ENCODE measurements at regions of chr10 and their contacts with region 1.

Region 1: GRCh38 chr10:30591249-30591670 is 38.3 kb downstream of the LYZL2 start:
- DNase-seq: peak; percentile 48
- ATAC-seq: peak; percentile 64
- H3K4me3 Mint-ChIP-seq: no peak overlapping the region
- H3K27ac Mint-ChIP-seq: no peak overlapping the region
- H3K4me1 Mint-ChIP-seq: peaks cover 17% of the 10 kb centered on the region
- H3K27me3 Mint-ChIP-seq: peaks cover 24% of the 10 kb centered on the region

Region 2: DNA sequence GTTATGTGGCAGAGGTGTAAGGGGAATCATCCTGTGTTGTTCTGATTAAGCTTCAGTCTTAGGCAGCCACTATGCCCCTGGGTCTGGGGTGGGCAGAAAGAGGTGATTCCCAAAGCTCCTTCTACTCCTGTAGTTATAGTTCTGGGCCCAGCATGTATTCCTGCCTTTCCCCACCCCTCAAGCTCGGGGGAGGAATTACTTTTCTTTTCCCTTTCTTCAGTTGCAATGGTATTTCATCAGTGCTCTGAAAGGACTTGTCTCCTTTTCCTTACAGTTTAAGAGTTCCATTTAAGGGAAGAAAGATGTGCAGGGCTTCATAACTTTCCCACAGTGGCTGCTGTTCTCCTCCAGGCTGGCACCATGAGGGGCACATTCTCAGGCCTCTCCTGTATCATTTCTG is 336.3 kb before region 1 on chr10:
- CTCF ChIA-PET with region 1: no interaction called
- DNase-seq: no peak
- ATAC-seq: no peak
- H3K4me3 Mint-ChIP-seq: no peak overlapping the region
- H3K27ac Mint-ChIP-seq: no peak overlapping the region
- H3K4me1 Mint-ChIP-seq: no peaks in the 10 kb centered on the region
- H3K27me3 Mint-ChIP-seq: peaks cover 37% of the 10 kb centered on the region

Region 3: GRCh38 chr10:30359373-30360206 is 231.7 kb before region 1 on chr10:
- CTCF ChIA-PET with region 1: interaction called, 37 read pairs
- DNase-seq: peak; percentile 81
- ATAC-seq: peak; percentile 89
- H3K4me3 Mint-ChIP-seq: no peak overlapping the region
- H3K27ac Mint-ChIP-seq: no peak overlapping the region
- H3K4me1 Mint-ChIP-seq: peaks cover 9% of the 10 kb centered on the region
- H3K27me3 Mint-ChIP-seq: peaks cover 7% of the 10 kb centered on the region

Region 4: GRCh38 chr10:30384701-30385201 is 206.5 kb before region 1 on chr10:
- CTCF ChIA-PET with region 1: interaction called, 141 read pairs
- DNase-seq: peak; percentile 57
- ATAC-seq: peak; percentile 67
- H3K4me3 Mint-ChIP-seq: no peak overlapping the region
- H3K27ac Mint-ChIP-seq: no peak overlapping the region
- H3K4me1 Mint-ChIP-seq: no peaks in the 10 kb centered on the region
- H3K27me3 Mint-ChIP-seq: peaks cover 23% of the 10 kb centered on the region

Region 5: GRCh38 chr10:30398788-30399187 is 192.5 kb before region 1 on chr10:
- CTCF ChIA-PET with region 1: interaction called, 141 read pairs
- DNase-seq: no peak
- ATAC-seq: peak; percentile 53
- H3K4me3 Mint-ChIP-seq: no peak overlapping the region
- H3K27ac Mint-ChIP-seq: no peak overlapping the region
- H3K4me1 Mint-ChIP-seq: peaks cover 34% of the 10 kb centered on the region
- H3K27me3 Mint-ChIP-seq: peaks cover 9% of the 10 kb centered on the region

Region 6: DNA sequence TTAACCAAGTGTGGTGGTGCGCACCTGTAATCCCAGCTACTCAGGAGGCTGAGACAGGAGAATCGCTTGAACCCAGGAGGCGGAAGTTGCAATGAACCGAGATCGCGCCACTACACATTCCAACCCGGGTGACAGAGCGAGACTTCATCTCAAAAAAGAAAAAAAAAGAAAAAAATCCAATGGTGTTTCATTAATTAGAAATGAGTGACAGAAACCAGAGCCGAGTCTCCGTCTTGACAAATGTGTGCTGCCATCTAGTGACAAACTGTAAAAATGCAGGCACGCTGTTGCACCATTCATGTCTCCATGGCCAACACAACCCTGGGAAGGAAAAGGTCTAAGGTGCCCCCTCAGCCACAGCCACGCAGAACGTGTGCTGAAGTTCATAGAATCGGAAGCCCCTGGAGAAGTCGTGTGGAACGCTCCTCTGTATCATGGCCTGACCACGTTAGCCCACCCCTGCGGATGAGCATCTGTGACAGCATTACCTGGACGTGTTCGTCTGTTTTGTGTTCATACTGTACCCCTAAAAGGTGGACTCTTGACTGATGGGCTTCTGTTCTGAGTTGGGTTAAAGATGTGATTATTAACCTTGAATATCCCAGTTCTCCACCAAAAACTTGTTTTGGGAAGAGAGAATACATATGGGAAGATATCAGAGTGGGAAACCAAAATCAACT is 56.7 kb before region 1 on chr10:
- CTCF ChIA-PET with region 1: interaction called, 13 read pairs
- DNase-seq: peak; percentile 86
- ATAC-seq: peak; percentile 47
- H3K4me3 Mint-ChIP-seq: no peak overlapping the region
- H3K27ac Mint-ChIP-seq: no peak overlapping the region
- H3K4me1 Mint-ChIP-seq: peaks cover 52% of the 10 kb centered on the region
- H3K27me3 Mint-ChIP-seq: no peaks in the 10 kb centered on the region

Region 7: GRCh38 chr10:30606313-30606712 is 15.1 kb after region 1 on chr10:
- CTCF ChIA-PET with region 1: interaction called, 13 read pairs
- DNase-seq: peak; percentile 12
- ATAC-seq: no peak
- H3K4me3 Mint-ChIP-seq: no peak overlapping the region
- H3K27ac Mint-ChIP-seq: no peak overlapping the region
- H3K4me1 Mint-ChIP-seq: peaks cover 6% of the 10 kb centered on the region
- H3K27me3 Mint-ChIP-seq: peaks cover 33% of the 10 kb centered on the region

Measured in activated CD8-positive, alpha-beta memory T cell treated with anti-CD3 and anti-CD28 coated beads, Interleukin-2, amount 10 ng/mL, durations not matched to agents 7 days and 5 days (primary cell).